K562 (cell line): ENCODE measurements at regions of chr10 and their contacts with region 1.

Region 1: DNA sequence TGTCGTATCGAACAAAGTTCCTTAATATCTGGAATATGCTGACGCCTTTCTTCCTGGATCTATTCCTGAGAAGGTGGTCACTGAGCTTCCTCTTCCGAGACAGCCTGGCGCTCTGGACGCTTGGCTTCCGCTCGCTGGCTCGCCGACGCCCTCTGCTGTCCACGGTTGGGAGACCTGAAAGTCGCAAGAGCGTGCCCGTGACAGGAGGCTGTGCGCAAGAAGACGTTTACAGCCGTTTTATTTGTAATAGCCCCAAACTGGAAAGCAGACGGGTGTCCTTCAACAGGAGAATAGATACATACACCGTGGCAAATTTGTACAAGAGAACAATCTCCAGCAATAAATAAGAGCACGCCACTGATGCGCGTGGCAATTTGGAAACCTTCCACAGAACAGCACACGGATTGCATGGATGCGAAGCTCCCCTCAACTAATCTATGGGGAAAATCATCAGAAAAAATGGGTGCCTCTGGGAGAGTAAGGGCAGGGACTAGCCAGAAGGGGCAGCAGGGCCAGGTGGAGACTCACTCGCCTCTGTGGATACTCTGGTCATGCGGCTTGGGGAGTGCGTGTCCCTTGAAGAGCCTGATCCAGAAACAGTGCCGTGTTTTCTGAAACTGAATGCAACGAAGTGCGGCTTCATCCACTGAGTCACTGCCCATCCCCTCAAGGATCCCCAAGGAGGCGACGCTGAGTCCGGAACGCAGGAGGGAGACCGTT is 41.5 kb upstream of the BNIP3 start:
- DNase-seq: peak; percentile 72 to 84 (median 76)
- ATAC-seq: peak; percentile 96
- H3K4me3 ChIP-seq: peak overlapping the region; percentile 6; the same call in 1 of the 2 replicates
- H3K27ac ChIP-seq: no peak overlapping the region
- H3K4me1 ChIP-seq: peaks cover 7 to 22% of the 10 kb centered on the region in 2 experiments; a peak in 3 of 5 replicates
- H3K27me3 ChIP-seq: peaks cover 16 to 33% of the 10 kb centered on the region in 2 experiments; a peak in 4 of 5 replicates
- CTCF ChIP-seq: peak; percentile 81 to 89 (median 85)
- EP300 ChIP-seq: no peak
- POLR2A ChIP-seq: no peak
- RAD21 ChIP-seq: peak; percentile 76 to 90

Region 2: GRCh38 chr10:131981429-131982184 is 41.6 kb before region 1 on chr10 and contains the start of gene BNIP3:
- CTCF ChIA-PET with region 1: interaction called, 9 read pairs
- POLR2A ChIA-PET with region 1: interaction called, 3 read pairs
- in situ Hi-C with region 1: no loop called
- intact Hi-C with region 1: loop called (anchors 5 kb)
- DNase-seq: peak; percentile 94 to 97 (median 97)
- ATAC-seq: peak; percentile 95
- H3K4me3 ChIP-seq: peak within 1 kb of the TSS; percentile 68
- H3K27ac ChIP-seq: peak within 1 kb of the TSS; percentile 79
- H3K4me1 ChIP-seq: peaks cover 30 to 35% of the 10 kb centered on the region in 2 experiments; a peak in 4 of 5 replicates
- H3K27me3 ChIP-seq: no peaks in the 10 kb centered on the region
- CTCF ChIP-seq: 0 out of 6 replicates have a peak, but pooled peaks of 1 of the 3 experiments have one; percentile 4
- EP300 ChIP-seq: no peak
- POLR2A ChIP-seq: peak; percentile 69
- RAD21 ChIP-seq: no peak
- polyA plus RNA-seq, gene BNIP3: 9.2 to 10.7 TPM